Colonic mucosa (tissue), 4 donors: ENCODE measurements at regions of chr1 and their contacts with region 1.

Region 1: DNA sequence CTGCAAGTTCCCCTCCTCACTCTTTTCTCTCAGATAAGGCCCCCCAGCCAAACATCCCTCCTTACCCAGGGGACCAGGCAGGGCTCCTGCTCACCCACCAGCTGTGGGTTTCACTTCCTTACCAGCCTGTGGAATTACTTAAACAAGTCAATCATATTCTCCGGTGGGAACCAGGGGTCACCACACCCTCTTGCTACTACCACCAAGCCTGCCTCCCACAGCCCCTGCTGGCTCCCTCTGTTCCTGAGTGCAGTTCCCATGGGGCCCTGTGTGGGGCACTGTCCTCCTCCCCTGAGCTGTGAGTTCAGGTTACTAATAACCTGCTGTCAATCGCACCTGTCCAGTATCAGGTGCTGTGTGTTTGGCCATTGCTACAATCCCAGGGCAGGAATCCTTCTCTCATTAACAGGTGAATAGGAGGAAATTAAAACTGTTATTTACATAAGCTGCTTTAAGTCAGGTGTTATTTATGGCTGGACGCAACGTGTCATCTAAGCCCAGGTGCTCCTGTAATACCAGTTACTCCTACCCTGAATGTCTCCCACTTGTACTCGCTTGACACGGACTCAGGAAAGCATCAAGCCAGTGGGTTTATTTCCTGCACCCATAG is 53.1 kb upstream of the LBR start:
- DNase-seq: peak; percentile 83
- H3K4me3 ChIP-seq: no peak overlapping the region
- H3K27ac ChIP-seq: no peak overlapping the region
- H3K4me1 ChIP-seq: peaks cover 7% of the 10 kb centered on the region
- H3K27me3 ChIP-seq: no peaks in the 10 kb centered on the region
- CTCF ChIP-seq: peak; percentile 96

Region 2: GRCh38 chr1:224922404-224923164 is 558.3 kb before region 1 on chr1:
- intact Hi-C with region 1: no loop called
- DNase-seq: no peak
- H3K4me3 ChIP-seq: no peak overlapping the region
- H3K27ac ChIP-seq: no peak overlapping the region
- H3K4me1 ChIP-seq: no peaks in the 10 kb centered on the region
- H3K27me3 ChIP-seq: no peaks in the 10 kb centered on the region
- CTCF ChIP-seq: peak; percentile 57

Region 3: GRCh38 chr1:225299624-225300023 is 181.3 kb before region 1 on chr1:
- intact Hi-C with region 1: no loop called
- DNase-seq: no peak
- H3K4me3 ChIP-seq: no peak overlapping the region
- H3K27ac ChIP-seq: no peak overlapping the region
- H3K4me1 ChIP-seq: no peaks in the 10 kb centered on the region
- H3K27me3 ChIP-seq: no peaks in the 10 kb centered on the region
- CTCF ChIP-seq: no peak

Region 4: DNA sequence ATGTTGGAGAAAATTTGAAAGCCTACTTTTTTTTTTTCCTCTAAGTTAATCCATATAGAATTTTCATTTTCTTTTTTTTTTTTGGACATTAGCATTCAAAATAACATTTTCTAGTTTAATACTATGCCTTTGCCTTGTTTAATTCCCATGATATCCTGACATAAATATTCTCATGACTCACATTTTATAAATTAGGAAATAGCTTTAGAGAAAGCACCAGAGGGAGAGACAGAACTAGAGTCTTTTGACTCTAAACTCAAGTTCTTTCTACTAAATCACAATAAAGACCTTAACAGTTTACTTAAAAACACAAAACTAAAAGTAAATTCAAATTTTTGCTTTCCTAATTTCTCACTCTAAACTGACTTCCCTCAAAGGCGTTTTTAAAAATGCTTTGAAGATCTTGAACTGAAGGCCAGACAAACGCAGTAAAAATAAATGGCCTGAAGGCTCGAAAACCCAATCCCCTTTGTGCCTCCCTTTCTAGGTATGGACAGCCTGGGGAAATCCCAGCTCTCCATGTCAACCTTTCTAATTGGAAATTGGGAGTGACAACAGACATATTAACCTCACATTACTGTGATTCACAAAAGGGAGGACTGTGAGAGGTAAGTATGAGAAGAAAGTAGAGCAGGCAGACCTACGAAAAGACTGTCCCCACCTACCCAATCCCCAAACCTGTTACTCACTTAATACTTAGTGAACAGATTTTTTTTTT is 67.4 kb after region 1 on chr1:
- intact Hi-C with region 1: loop called (anchors 10 kb)
- DNase-seq: no peak
- H3K4me3 ChIP-seq: no peak overlapping the region
- H3K27ac ChIP-seq: no peak overlapping the region
- H3K4me1 ChIP-seq: peaks cover 8% of the 10 kb centered on the region
- H3K27me3 ChIP-seq: no peaks in the 10 kb centered on the region
- CTCF ChIP-seq: no peak

Region 5: DNA sequence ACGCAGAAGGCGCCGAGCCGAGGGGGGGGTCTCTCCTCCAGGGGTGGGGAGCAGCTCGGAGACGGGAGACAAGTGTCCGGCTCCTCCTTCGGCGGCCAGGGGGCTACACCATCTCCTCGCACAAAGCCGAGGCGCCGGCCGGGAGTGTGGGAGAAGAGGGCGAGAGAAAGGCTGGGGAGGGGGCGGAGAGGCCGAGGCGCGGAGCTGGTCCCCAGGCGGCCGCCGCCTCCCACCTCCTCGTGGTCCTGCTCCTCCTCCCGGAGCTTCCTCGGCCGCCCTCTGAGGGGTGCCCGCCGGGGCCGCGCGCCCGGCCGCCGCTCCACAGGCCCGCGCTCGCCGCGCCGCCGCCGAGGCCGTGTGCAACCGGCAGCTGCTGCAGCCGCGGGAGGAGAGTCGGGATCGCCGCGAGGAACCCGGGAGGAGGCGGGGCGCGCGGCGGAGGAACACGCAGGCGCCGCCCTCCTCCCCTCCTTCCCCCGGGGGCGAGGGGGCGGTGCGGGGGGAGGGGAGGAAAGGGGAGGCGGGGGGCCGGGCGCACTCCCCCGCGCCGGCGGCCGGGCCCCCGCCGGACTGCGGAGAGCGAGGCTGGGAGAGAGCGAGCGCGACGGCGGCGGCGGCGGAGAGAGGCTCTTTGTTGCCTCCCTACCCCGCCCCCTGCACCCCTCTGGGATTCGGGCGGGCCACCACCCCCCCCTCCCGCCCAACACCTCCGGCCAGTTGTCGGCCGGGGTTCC is 172.0 kb after region 1 on chr1 and contains the start of gene ENAH:
- intact Hi-C with region 1: loop called (anchors 10 kb)
- DNase-seq: peak; percentile 72
- H3K4me3 ChIP-seq: peak within 1 kb of the TSS; percentile 85
- H3K27ac ChIP-seq: peak within 1 kb of the TSS; percentile 86
- H3K4me1 ChIP-seq: no peaks in the 10 kb centered on the region
- H3K27me3 ChIP-seq: no peaks in the 10 kb centered on the region
- CTCF ChIP-seq: no peak
- total RNA-seq, gene ENAH: 43.5 to 63.7 TPM

Region 6: DNA sequence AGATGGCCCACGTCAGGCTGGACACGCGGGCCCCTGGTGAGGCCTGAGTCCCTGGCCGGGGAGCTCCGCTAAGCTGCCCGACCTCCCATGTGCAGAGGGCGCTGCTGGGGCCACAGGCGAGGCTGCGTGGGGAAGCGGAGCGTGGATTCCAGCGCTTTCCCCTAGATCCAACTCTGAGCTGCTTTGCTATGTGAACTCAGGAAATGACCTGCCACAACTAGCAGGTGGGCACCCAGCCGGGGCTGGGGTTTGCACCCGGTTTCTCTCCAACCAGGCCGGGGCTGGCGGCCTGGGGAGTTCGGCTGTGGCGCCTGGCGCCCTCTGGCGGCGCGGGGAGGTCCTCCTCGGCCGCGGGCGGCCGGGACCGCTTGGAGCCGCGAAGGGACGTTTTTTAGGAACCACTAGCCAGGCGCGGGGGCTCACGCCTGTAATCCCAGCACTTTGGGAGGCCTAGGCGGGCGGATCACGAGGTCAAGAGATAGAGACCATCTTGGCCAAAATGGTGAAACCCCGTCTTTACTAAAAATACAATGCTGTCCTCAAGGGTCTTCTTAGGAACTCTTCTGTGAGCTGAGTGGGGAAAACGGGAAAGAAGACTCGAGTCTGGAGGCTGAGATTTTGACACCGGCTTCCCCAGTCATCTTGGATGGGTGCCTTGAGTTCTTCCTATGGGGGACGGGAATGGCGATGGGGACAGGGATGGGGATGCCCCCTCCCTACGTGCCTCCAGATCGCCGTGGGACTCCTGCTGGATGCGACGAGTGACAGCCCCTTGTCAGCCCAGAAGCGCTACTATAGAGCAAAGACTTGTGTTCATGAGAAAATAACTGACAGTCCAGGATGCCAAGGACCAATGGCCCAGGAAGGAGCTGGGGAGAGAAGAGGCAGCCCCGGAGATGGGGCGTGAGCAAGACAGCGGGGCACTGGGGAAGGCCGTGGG is 430.5 kb after region 1 on chr1:
- intact Hi-C with region 1: loop called (anchors 2 kb)
- DNase-seq: peak; percentile 71
- H3K4me3 ChIP-seq: no peak overlapping the region
- H3K27ac ChIP-seq: no peak overlapping the region
- H3K4me1 ChIP-seq: peaks cover 7% of the 10 kb centered on the region
- H3K27me3 ChIP-seq: no peaks in the 10 kb centered on the region
- CTCF ChIP-seq: peak; percentile 97